MCF 10A (cell line): ENCODE measurements at regions of chr6 and their contacts with region 1.

Region 1: DNA sequence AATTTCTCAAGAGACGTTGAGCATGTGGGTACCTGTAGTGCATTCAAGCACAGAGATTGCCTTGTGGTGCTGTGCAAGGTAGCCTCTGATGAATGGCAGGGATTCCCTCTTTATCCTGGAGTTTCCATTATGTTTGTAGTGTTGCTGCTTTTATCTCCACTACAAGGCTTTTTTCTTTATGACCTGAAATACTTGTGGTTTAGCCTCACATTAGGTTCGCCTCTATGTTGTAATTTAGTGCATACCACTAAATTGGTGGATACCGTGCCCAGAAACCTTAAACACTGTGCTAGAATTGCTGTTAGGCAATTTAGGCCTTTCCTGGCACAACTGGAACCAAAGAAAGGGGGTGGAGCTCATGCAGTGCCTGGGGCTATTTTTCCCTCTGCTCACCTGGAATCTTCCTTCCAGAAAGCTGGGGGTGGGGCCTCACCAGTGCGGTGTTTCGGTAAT is 76.7 kb downstream of the NCOA7 start:
- DNase-seq: peak; percentile 99
- H3K4me3 Mint-ChIP-seq: peak overlapping the region; percentile 39
- H3K27ac Mint-ChIP-seq: peak overlapping the region; percentile 87
- H3K4me1 Mint-ChIP-seq: peaks cover 57% of the 10 kb centered on the region
- H3K27me3 Mint-ChIP-seq: no peaks in the 10 kb centered on the region
- CTCF ChIP-seq: no peak

Region 2: DNA sequence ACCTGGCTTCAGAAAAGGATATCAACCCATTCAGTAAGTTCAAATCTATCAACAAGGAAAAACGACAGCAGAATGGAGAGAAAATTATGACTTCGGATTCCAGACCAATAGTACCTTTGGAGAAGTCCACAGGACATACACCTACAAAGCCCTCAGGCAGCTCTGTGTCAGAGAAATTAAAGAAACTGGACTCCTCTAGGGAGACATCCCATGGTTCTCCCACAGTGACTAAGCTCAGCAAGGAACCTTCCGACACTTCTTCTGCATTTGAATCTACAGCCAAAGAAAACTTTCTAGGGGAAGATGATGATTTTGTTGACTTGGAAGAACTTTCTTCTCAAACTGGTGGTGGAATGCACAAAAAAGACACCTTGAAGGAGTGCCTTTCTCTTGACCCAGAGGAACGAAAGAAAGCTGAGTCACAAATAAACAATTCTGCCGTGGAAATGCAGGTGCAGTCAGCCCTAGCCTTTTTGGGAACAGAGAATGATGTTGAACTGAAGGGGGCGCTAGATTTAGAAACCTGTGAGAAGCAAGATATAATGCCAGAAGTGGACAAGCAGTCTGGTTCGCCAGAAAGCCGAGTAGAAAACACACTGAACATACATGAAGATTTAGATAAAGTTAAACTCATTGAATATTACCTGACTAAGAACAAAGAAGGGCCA is 21.6 kb after region 1 on chr6:
- CTCF ChIA-PET with region 1: interaction called, 4 read pairs
- POLR2A ChIA-PET with region 1: interaction called, 11 read pairs
- intact Hi-C with region 1: no loop called
- DNase-seq: peak; percentile 77
- H3K4me3 Mint-ChIP-seq: no peak overlapping the region
- H3K27ac Mint-ChIP-seq: peak overlapping the region; percentile 75
- H3K4me1 Mint-ChIP-seq: peaks cover 7% of the 10 kb centered on the region
- H3K27me3 Mint-ChIP-seq: no peaks in the 10 kb centered on the region
- CTCF ChIP-seq: peak; percentile 35

Region 3: DNA sequence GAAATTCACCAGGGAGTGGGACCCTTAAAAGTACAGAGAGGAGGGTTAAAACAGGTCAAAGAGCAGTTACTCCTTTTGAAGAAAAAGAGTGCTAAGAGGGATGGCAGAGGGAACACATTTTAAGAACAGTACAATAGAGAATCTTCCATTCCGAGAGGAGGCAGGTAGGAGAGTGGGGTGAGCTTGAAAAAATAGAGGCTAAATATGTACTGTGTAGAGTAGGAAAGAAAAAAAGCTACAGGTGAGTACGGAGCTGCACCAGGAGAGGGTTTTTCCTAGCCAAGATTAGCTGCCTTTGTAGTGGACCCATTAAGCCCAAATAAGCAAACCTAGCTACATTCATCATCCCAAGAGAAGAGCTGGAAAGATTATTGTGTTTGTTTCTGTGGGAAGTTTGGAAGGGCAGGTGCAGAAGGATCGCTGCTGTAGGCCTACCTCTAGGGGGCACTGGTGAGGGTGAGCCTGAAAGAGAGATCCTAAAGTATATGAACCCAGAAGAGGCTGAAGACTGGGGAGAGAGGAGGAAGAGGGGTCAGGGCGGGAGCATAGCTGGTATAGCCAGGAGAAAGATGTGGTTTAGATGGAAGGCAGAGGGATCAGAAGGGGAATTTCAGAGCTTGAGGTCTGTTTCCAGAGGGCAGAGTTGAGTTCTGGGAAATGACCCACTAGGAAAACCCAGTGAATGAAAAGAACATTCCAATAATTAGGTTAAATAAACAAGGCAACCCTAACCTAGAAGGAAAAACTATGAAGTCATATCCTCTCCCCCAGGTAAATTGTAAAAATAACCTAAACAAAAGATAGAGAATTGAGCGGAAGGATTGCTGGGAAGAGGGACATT is 38.9 kb after region 1 on chr6:
- CTCF ChIA-PET with region 1: interaction called, 4 read pairs
- POLR2A ChIA-PET with region 1: interaction called, 95 read pairs
- intact Hi-C with region 1: loop called (anchors 2 kb)
- DNase-seq: peak; percentile 69
- H3K4me3 Mint-ChIP-seq: no peak overlapping the region
- H3K27ac Mint-ChIP-seq: peak overlapping the region; percentile 24
- H3K4me1 Mint-ChIP-seq: peaks cover 41% of the 10 kb centered on the region
- H3K27me3 Mint-ChIP-seq: no peaks in the 10 kb centered on the region
- CTCF ChIP-seq: peak; percentile 59

Region 4: GRCh38 chr6:125918681-125919566 is 51.4 kb after region 1 on chr6:
- CTCF ChIA-PET with region 1: interaction called, 4 read pairs
- POLR2A ChIA-PET with region 1: interaction called, 95 read pairs
- intact Hi-C with region 1: no loop called
- DNase-seq: peak; percentile 97
- H3K4me3 Mint-ChIP-seq: peak overlapping the region; percentile 90
- H3K27ac Mint-ChIP-seq: peak overlapping the region; percentile 99
- H3K4me1 Mint-ChIP-seq: peaks cover 47% of the 10 kb centered on the region
- H3K27me3 Mint-ChIP-seq: no peaks in the 10 kb centered on the region
- CTCF ChIP-seq: no peak

Region 5: DNA sequence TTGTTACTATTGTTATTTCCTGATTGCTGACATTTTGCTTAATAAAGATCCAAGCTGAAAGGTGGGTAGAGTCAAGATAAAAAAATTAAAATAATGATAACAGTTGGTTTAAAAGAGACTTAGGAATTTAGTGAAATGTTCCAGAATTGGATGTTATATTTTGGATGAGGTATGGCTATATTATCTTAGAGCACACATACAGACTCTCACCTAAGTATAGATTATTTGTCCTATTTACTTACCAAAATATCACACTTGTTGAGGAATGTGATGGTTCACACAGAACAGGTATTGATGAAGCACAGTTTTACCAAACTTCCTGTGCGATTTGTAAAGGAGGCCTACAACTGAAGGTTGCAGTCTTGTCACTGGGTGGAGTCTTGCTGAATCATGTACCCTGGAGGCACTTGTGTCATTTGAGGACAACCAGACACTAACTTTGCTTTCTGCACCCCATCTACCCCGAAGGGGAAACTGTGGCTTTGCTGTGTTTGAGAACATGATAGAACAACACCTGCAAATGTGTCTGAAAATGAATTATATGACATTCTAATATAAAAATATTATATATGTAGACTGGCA is 56.6 kb after region 1 on chr6:
- CTCF ChIA-PET with region 1: interaction called, 4 read pairs
- POLR2A ChIA-PET with region 1: interaction called, 40 read pairs
- intact Hi-C with region 1: no loop called
- DNase-seq: peak; percentile 73
- H3K4me3 Mint-ChIP-seq: peak overlapping the region; percentile 34
- H3K27ac Mint-ChIP-seq: peak overlapping the region; percentile 80
- H3K4me1 Mint-ChIP-seq: peaks cover 39% of the 10 kb centered on the region
- H3K27me3 Mint-ChIP-seq: no peaks in the 10 kb centered on the region
- CTCF ChIP-seq: no peak

Region 6: GRCh38 chr6:125944434-125944816 is 76.9 kb after region 1 on chr6:
- CTCF ChIA-PET with region 1: interaction called, 9 read pairs
- POLR2A ChIA-PET with region 1: interaction called, 43 read pairs
- intact Hi-C with region 1: no loop called
- DNase-seq: peak; percentile 93
- H3K4me3 Mint-ChIP-seq: no peak overlapping the region
- H3K27ac Mint-ChIP-seq: peak overlapping the region; percentile 92
- H3K4me1 Mint-ChIP-seq: peaks cover 72% of the 10 kb centered on the region
- H3K27me3 Mint-ChIP-seq: no peaks in the 10 kb centered on the region
- CTCF ChIP-seq: no peak

Region 7: GRCh38 chr6:125986300-125987025 is 119.0 kb after region 1 on chr6 and contains the start of gene TRMT11:
- CTCF ChIA-PET with region 1: interaction called, 4 read pairs
- POLR2A ChIA-PET with region 1: interaction called, 11 read pairs
- intact Hi-C with region 1: no loop called
- DNase-seq: peak; percentile 92
- H3K4me3 Mint-ChIP-seq: no peak within 1 kb of the TSS
- H3K27ac Mint-ChIP-seq: no peak within 1 kb of the TSS
- H3K4me1 Mint-ChIP-seq: no peaks in the 10 kb centered on the region
- H3K27me3 Mint-ChIP-seq: no peaks in the 10 kb centered on the region
- CTCF ChIP-seq: no peak
- total RNA-seq, gene TRMT11: 28.8 and 32.5 TPM in 2 replicates